ENCODE measurements at regions of chr11 and their contacts with region 1.

Region 1: GRCh38 chr11:4960877-4961276 is 5.4 kb upstream of the OR51A2 start:
- DNase-seq: no peak
- ATAC-seq: no peak
- H3K4me3 ChIP-seq: no peak overlapping the region
- H3K4me3 Mint-ChIP-seq: no peak overlapping the region
- H3K27ac ChIP-seq: no peak overlapping the region
- H3K27ac Mint-ChIP-seq: no peak overlapping the region
- H3K4me1 ChIP-seq: no peaks in the 10 kb centered on the region
- H3K4me1 Mint-ChIP-seq: no peaks in the 10 kb centered on the region
- H3K27me3 ChIP-seq: no peaks in the 10 kb centered on the region
- H3K27me3 Mint-ChIP-seq: peaks cover 0 to 7% (median 3%) of the 10 kb centered on the region in 5 donors

Region 2: DNA sequence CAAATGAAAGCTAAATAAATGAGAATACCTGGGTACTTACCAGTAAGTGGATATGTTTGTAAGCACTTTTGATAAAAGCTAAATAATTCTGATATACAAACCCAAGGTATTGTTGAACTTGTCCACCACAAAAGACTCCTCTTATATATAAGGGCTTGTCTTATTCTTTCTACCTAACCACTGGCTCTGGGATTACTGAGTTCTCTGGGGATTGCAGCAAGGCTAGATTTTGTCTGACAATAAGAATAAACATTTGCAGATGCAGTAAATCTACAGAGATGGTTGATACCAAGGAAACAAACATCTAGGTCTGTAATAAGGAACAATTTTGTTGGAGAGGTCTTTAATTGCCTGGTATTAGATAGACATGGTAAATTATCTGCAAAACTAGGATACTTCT is 13.4 kb before region 1 on chr11 and contains the start of gene OR51A4:
- CTCF ChIA-PET with region 1: no interaction called
- POLR2A ChIA-PET with region 1: no interaction called
- intact Hi-C with region 1: loop called in 1 of 2 experiments (anchors 1 kb)
- DNase-seq: no peak
- ATAC-seq: no peak
- H3K4me3 ChIP-seq: no peak within 1 kb of the TSS
- H3K4me3 Mint-ChIP-seq: no peak within 1 kb of the TSS
- H3K27ac ChIP-seq: no peak within 1 kb of the TSS
- H3K27ac Mint-ChIP-seq: no peak within 1 kb of the TSS
- H3K4me1 ChIP-seq: no peaks in the 10 kb centered on the region
- H3K4me1 Mint-ChIP-seq: no peaks in the 10 kb centered on the region
- H3K27me3 ChIP-seq: no peaks in the 10 kb centered on the region
- H3K27me3 Mint-ChIP-seq: peaks cover 0 to 15% (median 4%) of the 10 kb centered on the region in 5 donors
- total RNA-seq, gene OR51A4: not detected

Region 3: DNA sequence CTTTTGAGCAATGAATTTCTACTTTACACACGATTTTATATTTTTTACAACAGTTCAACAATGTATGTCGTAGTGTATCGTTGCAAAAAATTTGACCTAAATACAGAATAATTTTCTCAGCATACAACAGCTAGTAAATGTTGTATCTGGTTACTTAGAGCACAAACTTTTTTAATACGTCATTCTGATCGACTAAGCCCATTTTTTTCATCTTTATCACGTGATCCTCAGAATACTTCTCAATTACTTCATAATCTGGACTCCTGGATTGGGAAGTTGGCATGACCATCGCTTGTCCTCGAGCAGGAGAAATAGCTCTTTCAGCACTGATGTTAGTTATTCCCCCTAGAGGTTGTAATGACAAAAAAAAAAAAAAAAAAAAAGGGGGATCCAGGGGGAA is 50.4 kb after region 1 on chr11:
- CTCF ChIA-PET with region 1: no interaction called
- POLR2A ChIA-PET with region 1: no interaction called
- intact Hi-C with region 1: loop called in 1 of 2 experiments (anchors 10 kb)
- DNase-seq: no peak
- ATAC-seq: no peak
- H3K4me3 ChIP-seq: no peak overlapping the region
- H3K4me3 Mint-ChIP-seq: no peak overlapping the region
- H3K27ac ChIP-seq: no peak overlapping the region
- H3K27ac Mint-ChIP-seq: no peak overlapping the region
- H3K4me1 ChIP-seq: no peaks in the 10 kb centered on the region
- H3K4me1 Mint-ChIP-seq: no peaks in the 10 kb centered on the region
- H3K27me3 ChIP-seq: no peaks in the 10 kb centered on the region
- H3K27me3 Mint-ChIP-seq: peaks cover 0 to 14% (median 10%) of the 10 kb centered on the region in 5 donors

Region 4: DNA sequence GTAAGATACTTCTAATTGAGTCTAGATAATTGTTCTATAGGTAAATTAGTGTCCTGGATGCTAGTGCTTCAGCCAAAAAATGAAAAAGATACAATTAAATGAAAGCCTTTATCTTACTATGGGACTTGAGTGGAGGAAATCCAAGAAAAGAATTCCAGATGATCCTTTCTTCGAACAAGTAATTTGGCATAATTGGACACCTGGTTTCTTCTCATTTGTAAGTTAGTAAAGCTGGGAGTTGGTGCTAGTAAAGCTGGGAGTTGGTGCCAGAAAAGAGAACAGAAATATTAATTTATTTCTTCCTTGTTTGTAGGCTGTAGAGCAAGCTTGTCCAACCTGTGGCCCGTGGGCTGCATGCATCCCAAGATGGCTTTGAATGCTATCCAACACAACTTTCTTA is 227.3 kb after region 1 on chr11:
- CTCF ChIA-PET with region 1: no interaction called
- POLR2A ChIA-PET with region 1: no interaction called
- intact Hi-C with region 1: no loop called
- DNase-seq: no peak
- ATAC-seq: no peak
- H3K4me3 ChIP-seq: no peak overlapping the region
- H3K4me3 Mint-ChIP-seq: no peak overlapping the region
- H3K27ac ChIP-seq: no peak overlapping the region
- H3K27ac Mint-ChIP-seq: no peak overlapping the region
- H3K4me1 ChIP-seq: no peaks in the 10 kb centered on the region
- H3K4me1 Mint-ChIP-seq: no peaks in the 10 kb centered on the region
- H3K27me3 ChIP-seq: no peaks in the 10 kb centered on the region
- H3K27me3 Mint-ChIP-seq: peaks cover 0 to 6% (median 0%) of the 10 kb centered on the region in 5 donors

Region 5: DNA sequence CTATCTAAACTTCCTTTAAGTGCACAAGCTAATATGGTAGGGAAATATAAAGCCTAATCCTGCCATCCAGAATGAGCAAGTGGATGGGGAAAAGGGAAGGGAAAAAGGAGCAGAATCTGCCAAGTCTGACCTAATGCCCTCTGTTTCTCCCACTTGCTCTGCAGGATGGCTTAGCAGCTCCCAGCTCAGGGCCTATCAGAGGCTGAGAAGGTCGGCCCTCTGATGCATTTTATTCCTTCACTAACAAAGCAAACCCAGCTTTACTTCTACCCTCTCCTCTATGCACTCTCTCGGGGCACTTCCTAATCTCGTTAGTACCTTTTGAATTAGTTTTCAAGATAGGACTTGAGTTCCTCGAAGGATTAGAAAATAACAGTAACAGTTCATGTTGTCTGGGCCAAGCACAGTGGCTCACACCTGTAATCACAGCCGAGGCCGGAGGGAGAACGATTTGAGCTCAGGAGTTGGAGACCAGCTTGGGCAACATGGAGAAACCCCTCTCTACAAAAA is 249.6 kb after region 1 on chr11:
- CTCF ChIA-PET with region 1: no interaction called
- POLR2A ChIA-PET with region 1: no interaction called
- intact Hi-C with region 1: no loop called
- DNase-seq: no peak
- ATAC-seq: no peak
- H3K4me3 ChIP-seq: no peak overlapping the region
- H3K4me3 Mint-ChIP-seq: no peak overlapping the region
- H3K27ac ChIP-seq: no peak overlapping the region
- H3K27ac Mint-ChIP-seq: no peak overlapping the region
- H3K4me1 ChIP-seq: no peaks in the 10 kb centered on the region
- H3K4me1 Mint-ChIP-seq: no peaks in the 10 kb centered on the region
- H3K27me3 ChIP-seq: no peaks in the 10 kb centered on the region
- H3K27me3 Mint-ChIP-seq: no peaks in the 10 kb centered on the region

Measured in naive thymus-derived CD4-positive, alpha-beta T cell (primary cell).